Calu3 (cell line): ENCODE measurements at regions of chr5 and their contacts with region 1.

Region 1: DNA sequence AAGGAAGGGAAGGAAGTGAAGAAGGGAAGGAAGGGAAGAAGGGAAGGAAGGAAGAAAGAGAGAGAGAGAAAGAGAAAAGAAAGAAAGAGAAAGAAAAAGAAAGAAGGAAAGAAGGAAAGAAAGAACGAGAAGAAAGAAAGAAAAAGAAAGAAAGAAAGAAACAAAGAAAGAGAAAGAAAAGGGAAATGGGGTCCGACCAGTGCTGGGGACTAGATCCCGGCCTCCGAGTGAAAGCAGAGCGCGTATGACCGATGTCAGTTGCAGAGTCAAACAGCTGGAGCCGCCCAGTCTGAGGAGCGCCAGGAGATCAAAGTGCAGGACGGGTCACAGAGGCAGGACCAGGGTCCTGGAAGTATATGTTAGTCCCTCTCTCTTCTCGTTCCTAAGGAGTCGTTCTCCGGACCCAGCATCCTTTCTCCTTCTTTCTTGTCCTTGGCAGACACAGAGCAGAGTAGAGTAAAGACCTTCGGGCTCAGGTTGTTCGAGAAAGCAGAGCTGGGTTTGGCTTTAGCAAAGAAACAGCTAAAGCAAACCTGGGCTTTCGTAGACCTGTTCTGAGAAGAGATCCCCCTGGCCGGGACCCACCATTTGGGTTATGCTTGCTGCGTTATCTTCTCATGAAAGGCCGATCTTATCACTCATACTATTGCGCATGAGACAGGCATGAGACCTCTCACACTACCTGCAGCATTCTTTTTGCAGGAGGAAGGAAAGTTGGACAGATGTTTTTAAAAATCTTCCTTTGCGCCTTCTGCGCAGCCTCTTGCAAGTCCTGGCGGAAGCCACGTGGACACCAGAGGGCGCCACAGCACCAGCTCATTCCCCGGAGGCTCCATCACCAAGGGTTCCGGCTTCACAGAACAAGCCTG is 305.2 kb upstream of the MSX2 start:
- DNase-seq: peak; percentile 96
- H3K4me3 Mint-ChIP-seq: peak overlapping the region; percentile 68
- H3K27ac Mint-ChIP-seq: peak overlapping the region; percentile 22
- H3K4me1 Mint-ChIP-seq: peaks cover 25% of the 10 kb centered on the region
- H3K27me3 Mint-ChIP-seq: no peaks in the 10 kb centered on the region
- CTCF ChIP-seq: peak; percentile 97

Region 2: GRCh38 chr5:174166231-174167079 is 252.7 kb before region 1 on chr5:
- CTCF ChIA-PET with region 1: no interaction called
- intact Hi-C with region 1: no loop called
- DNase-seq: no peak
- H3K4me3 Mint-ChIP-seq: no peak overlapping the region
- H3K27ac Mint-ChIP-seq: no peak overlapping the region
- H3K4me1 Mint-ChIP-seq: no peaks in the 10 kb centered on the region
- H3K27me3 Mint-ChIP-seq: peaks cover 57% of the 10 kb centered on the region
- CTCF ChIP-seq: no peak

Region 3: GRCh38 chr5:174532455-174533453 is 113.6 kb after region 1 on chr5:
- CTCF ChIA-PET with region 1: interaction called, 11 read pairs
- intact Hi-C with region 1: loop called (anchors 5 kb)
- DNase-seq: peak; percentile 95
- H3K4me3 Mint-ChIP-seq: peak overlapping the region; percentile 49
- H3K27ac Mint-ChIP-seq: peak overlapping the region; percentile 94
- H3K4me1 Mint-ChIP-seq: peaks cover 84% of the 10 kb centered on the region
- H3K27me3 Mint-ChIP-seq: no peaks in the 10 kb centered on the region
- CTCF ChIP-seq: no peak

Region 4: DNA sequence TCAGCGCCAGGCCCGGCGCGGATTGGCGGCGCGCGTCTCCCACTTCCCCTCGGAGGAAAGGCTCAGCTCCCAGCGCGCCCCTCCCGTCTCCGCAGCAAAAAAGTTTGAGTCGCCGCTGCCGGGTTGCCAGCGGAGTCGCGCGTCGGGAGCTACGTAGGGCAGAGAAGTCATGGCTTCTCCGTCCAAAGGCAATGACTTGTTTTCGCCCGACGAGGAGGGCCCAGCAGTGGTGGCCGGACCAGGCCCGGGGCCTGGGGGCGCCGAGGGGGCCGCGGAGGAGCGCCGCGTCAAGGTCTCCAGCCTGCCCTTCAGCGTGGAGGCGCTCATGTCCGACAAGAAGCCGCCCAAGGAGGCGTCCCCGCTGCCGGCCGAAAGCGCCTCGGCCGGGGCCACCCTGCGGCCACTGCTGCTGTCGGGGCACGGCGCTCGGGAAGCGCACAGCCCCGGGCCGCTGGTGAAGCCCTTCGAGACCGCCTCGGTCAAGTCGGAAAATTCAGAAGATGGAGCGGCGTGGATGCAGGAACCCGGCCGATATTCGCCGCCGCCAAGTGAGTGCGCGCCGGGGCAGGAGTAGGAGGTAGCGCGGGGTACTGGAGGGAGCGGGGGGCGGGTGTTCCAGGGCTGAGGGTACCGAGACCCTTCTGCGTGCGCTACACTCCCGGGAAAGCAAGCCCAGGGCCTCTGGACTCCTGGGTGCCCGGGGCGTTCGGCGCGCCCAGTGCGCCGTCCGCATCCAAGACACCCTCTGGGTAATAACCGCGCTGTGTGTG is 305.5 kb after region 1 on chr5 and contains the start of gene MSX2:
- CTCF ChIA-PET with region 1: interaction called, 14 read pairs
- intact Hi-C with region 1: no loop called
- DNase-seq: peak; percentile 95
- H3K4me3 Mint-ChIP-seq: peak within 1 kb of the TSS; percentile 81
- H3K27ac Mint-ChIP-seq: peak within 1 kb of the TSS; percentile 81
- H3K4me1 Mint-ChIP-seq: peaks cover 31% of the 10 kb centered on the region
- H3K27me3 Mint-ChIP-seq: peaks cover 43% of the 10 kb centered on the region
- CTCF ChIP-seq: no peak
- total RNA-seq, gene MSX2: 8.4 and 10.4 TPM in 2 replicates

Region 5: DNA sequence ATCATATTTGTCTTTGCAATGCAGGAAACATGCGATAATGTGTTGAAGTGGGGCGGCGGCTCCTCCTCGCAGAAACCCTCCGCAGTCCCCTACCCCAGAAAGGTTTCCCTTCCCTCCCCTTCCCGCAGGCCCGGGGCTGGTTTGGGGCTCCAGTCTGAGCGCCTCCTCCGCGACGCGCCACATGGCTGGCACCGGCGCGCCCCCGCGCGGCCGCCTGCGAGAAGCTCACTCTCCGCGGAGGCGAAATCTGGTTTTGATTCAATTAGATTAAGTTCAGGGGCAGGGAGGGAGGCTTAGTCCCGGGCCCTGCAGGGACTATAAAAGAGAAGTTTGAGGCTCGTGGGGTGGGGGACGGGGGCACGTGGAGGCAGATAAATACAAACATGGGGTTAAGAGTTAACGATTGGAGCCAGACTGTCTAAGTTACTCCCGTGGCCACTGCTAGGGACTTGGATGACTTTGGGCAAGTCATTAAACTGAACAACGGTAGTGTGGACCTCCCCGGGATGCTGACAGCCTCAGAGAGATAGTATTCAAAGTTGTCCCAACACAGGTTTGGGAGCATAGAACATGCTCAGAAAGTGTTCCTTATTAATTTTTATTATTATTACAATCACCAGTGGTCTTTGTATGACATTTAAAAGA is 374.6 kb after region 1 on chr5:
- CTCF ChIA-PET with region 1: interaction called, 26 read pairs
- intact Hi-C with region 1: loop called (anchors 1 kb)
- DNase-seq: peak; percentile 83
- H3K4me3 Mint-ChIP-seq: no peak overlapping the region
- H3K27ac Mint-ChIP-seq: no peak overlapping the region
- H3K4me1 Mint-ChIP-seq: no peaks in the 10 kb centered on the region
- H3K27me3 Mint-ChIP-seq: peaks cover 33% of the 10 kb centered on the region
- CTCF ChIP-seq: peak; percentile 89